MCF 10A (cell line): ENCODE measurements at regions of chr1 and their contacts with region 1.

Region 1: GRCh38 chr1:150890033-150890416 is 3.1 kb downstream of the CTXND2 start:
- DNase-seq: no peak
- H3K4me3 Mint-ChIP-seq: no peak overlapping the region
- H3K27ac Mint-ChIP-seq: no peak overlapping the region
- H3K4me1 Mint-ChIP-seq: peaks cover 12% of the 10 kb centered on the region
- H3K27me3 Mint-ChIP-seq: no peaks in the 10 kb centered on the region
- CTCF ChIP-seq: no peak

Region 2: GRCh38 chr1:150528196-150528595 is 361.8 kb before region 1 on chr1:
- CTCF ChIA-PET with region 1: no interaction called
- POLR2A ChIA-PET with region 1: no interaction called
- intact Hi-C with region 1: no loop called
- DNase-seq: no peak
- H3K4me3 Mint-ChIP-seq: no peak overlapping the region
- H3K27ac Mint-ChIP-seq: no peak overlapping the region
- H3K4me1 Mint-ChIP-seq: peaks cover 13% of the 10 kb centered on the region
- H3K27me3 Mint-ChIP-seq: no peaks in the 10 kb centered on the region
- CTCF ChIP-seq: no peak

Region 3: GRCh38 chr1:150876119-150876454 is 13.9 kb before region 1 on chr1:
- CTCF ChIA-PET with region 1: interaction called, 3 read pairs
- POLR2A ChIA-PET with region 1: interaction called, 37 read pairs
- intact Hi-C with region 1: no loop called
- DNase-seq: peak; percentile 72
- H3K4me3 Mint-ChIP-seq: peak overlapping the region; percentile 76
- H3K27ac Mint-ChIP-seq: peak overlapping the region; percentile 82
- H3K4me1 Mint-ChIP-seq: peaks cover 20% of the 10 kb centered on the region
- H3K27me3 Mint-ChIP-seq: no peaks in the 10 kb centered on the region
- CTCF ChIP-seq: no peak